ENCODE measurements at regions of chr4 and their contacts with region 1.

Region 1: GRCh38 chr4:68344049-68344448 is 5.8 kb downstream of the YTHDC1 start:
- DNase-seq: no peak
- H3K4me3 ChIP-seq: no peak overlapping the region
- H3K27ac ChIP-seq: no peak overlapping the region
- H3K27me3 ChIP-seq: no peaks in the 10 kb centered on the region
- CTCF ChIP-seq: no peak

Region 2: DNA sequence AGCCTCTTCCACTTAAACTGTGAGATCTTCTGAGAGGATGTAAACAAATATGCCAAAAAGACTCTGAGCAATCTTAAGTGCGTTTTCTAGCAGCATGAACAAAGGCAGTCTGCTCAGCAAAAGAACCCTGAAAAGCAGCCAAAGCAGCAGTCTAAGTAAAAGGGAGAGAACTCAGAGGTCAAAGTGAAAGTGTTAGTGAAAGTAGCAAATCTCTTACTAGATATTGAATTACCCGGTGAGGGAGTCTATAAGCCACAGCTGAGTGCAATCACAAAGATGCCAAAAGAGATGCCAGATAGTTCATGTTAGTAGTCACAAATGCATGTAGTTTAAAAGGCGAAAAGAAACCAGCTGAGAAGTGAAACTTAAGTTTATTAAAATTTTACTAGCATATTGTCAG is 582.0 kb before region 1 on chr4:
- CTCF ChIA-PET with region 1: no interaction called
- POLR2A ChIA-PET with region 1: no interaction called
- DNase-seq: no peak
- H3K4me3 ChIP-seq: no peak overlapping the region
- H3K27ac ChIP-seq: no peak overlapping the region
- H3K27me3 ChIP-seq: no peaks in the 10 kb centered on the region
- CTCF ChIP-seq: no peak

Region 3: DNA sequence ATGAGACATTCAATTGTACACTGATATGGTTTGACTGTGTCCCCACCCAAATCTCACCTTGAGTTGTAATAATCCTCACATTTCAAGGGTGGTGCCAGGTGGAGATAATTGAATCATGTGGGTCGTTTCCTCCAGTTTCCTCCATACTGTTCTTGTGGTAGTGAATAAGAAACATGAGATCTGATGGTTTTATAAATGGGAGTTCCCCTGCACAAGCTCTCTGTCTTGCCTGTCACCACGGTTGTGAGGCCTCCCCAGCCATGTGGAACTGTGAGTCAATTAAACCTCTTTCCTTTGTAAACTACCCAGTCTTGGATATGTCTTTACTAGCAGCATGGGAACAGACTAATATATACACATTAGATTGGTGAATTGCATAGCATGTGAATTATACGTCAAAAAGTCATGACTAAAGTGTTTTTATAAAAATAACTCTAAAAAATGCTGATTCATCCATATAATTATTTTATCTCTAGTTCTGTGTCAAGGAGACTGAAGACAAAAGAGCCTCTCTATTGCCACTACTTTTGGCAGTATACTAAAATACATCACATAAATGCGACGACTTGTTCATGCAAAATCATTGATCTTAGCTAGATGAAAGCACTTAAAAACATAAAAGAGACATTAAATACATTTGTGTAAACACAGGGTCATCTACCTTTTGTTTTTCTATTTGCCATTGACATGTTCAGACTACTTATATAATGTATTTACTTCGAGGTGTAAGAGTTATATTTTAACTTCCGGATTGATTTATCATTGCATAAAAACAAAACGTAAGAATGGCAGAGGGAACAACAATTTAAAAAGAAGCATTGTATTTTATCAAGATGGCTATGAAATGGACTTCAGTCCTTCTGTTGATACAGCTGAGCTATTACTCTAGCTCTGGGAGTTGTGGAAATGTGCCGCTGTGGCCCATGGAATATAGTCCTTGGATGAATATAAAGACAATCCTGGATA is 44.3 kb before region 1 on chr4:
- CTCF ChIA-PET with region 1: no interaction called
- POLR2A ChIA-PET with region 1: interaction called, 12 read pairs
- DNase-seq: no peak
- H3K4me3 ChIP-seq: no peak overlapping the region
- H3K27ac ChIP-seq: no peak overlapping the region
- H3K27me3 ChIP-seq: no peaks in the 10 kb centered on the region
- CTCF ChIP-seq: no peak

Region 4: DNA sequence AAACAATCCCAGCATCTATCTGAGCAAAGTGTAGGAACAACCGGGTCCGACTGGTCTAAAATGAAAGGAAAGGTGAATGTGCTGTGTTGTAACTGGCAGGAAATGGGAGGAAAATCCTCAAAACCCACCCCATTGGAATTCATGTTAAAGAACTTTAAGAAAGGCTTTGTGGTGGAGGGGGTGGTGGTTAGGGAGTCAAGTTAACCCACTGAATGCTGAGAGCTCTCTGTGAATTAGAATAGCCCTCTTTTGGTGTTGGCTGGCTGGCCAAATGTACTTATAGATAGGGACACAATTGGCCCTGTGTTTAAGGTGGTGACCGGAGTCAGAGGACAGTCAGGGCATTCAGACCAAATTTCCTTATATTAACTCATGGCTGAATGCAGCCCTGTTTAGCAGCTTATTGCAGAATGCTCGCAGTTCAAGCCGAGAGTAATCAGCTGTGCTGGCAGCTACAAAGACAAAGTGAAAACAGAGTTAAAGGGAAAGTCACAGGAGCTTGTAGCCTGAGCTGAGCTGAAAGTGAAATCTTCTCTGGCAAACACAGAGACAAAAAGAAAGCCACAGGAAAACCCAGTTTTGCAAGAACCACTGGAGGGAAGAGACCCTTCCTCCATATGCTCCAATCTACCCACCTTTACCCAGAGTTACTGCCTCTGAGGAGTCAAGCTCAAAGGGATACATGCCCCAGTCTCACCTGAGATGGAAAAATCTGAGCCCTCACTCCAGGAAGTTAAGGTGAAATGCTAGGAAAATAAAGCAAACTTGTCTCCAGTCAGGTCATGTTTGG is 713.8 kb after region 1 on chr4:
- CTCF ChIA-PET with region 1: no interaction called
- POLR2A ChIA-PET with region 1: no interaction called
- DNase-seq: no peak
- H3K4me3 ChIP-seq: no peak overlapping the region
- H3K27ac ChIP-seq: peak overlapping the region; percentile 21
- H3K27me3 ChIP-seq: no peaks in the 10 kb centered on the region
- CTCF ChIP-seq: no peak